Sigmoid colon (tissue), 7 donors: ENCODE measurements at regions of chr17 and their contacts with region 1.

Region 1: DNA sequence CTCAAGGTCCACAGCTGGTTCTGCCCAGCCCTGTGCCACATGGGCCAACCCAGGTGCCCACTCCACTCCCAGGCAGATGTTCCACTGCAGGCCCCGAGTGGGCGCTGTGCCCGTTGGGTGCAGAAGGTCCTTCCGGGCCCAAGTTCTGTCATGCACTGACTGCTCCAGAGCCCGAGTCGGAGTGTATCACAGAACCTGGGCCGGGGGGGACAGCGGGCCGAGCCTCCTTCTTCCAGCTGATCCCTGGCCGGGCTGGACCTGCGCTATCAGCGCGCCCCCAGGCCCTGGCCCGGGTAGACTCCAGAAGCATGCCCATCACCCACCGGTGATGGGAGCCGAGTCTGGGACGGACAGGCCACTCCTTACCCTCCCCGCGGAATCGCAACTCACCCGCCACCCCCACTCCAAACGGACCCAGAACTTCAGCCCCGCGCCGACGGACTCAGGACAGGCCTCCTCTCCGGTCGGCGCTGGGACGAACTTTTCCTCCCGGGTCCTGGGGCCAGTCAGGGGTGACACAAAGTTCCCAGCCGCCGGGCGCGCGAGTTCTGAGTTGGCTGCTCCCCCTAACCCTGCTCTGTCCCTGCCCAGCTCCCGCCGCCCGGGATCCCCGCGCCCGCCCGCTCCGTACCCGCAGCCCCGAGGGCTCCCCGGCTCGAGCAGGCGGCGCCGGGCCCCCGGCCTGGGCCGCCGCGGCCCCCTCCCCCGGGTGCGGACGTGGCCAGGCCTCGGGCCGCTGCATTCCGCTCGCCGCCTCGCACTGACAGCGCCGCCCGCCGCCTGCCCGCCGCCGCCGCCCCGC is at the start of gene COPZ2:
- DNase-seq: peak; percentile 87
- H3K4me3 ChIP-seq: peak within 1 kb of the TSS; percentile 54 to 76 (median 70)
- H3K27ac ChIP-seq: peak within 1 kb of the TSS; percentile 81 to 85 (median 84)
- H3K4me1 ChIP-seq: peaks cover 0 to 16% (median 12%) of the 10 kb centered on the region in 4 donors
- H3K27me3 ChIP-seq: no peaks in the 10 kb centered on the region
- CTCF ChIP-seq: peak in 2 of 4 experiments; percentile 53 to 54
- EP300 ChIP-seq: no peak
- POLR2A ChIP-seq: no peak
- total RNA-seq, gene COPZ2: 52.3 to 64.0 (median 58.9) TPM

Region 2: DNA sequence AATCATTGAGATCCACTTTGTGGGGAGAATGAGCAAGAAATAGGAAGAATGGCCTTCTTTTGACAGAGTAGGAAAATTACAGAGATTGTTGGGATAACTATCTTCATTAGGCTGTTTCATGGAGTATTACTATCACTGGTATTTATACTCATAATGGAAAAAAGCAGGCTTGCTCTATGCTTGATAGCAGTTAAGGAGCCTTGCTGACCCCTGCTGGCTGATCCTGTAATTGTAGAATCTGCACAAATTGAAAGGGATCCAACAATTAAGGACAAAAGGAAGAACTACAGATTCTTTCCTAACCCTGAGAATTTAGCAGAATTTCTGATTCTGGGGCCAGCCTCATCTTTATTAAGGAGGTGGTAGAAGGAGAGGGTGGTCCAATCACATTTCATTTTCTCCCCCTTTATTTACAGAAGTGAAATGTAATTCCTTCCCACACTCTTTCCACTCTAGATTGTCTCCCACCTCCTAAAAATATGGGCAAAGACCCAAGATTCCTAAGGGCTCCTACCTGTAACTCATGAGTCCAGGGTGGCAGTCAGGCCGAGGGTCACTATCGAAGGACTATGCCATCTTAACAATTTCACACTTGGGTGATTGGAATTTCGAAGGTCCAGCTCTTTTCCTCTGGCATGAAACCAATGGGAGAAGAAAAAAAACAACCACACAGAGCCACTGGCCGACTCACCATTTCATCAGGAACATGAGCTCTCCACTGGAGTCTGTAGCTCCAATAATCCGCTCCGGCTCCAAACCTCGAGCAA is 37.3 kb after region 1 on chr17:
- intact Hi-C with region 1: loop called (anchors 1 kb)
- DNase-seq: peak; percentile 86
- H3K4me3 ChIP-seq: no peak overlapping the region
- H3K27ac ChIP-seq: peak overlapping the region in 3 of 4 donors; percentile 19 to 45 (median 39)
- H3K4me1 ChIP-seq: peaks cover 0 to 9% (median 3%) of the 10 kb centered on the region in 4 donors
- H3K27me3 ChIP-seq: no peaks in the 10 kb centered on the region
- CTCF ChIP-seq: peak; percentile 52 to 84 (median 74)
- EP300 ChIP-seq: no peak
- POLR2A ChIP-seq: no peak